Activated B cell treated with CpG ODN at 0.5 μM for 24 hours (primary cell): ENCODE measurements at regions of chr13 and their contacts with region 1.

Region 1: GRCh38 chr13:52128714-52129700 is at the start of gene NEK5:
- DNase-seq: peak; percentile 56
- ATAC-seq: peak; percentile 68
- H3K4me3 Mint-ChIP-seq: peak within 1 kb of the TSS; percentile 87
- H3K27ac Mint-ChIP-seq: no peak within 1 kb of the TSS
- H3K4me1 Mint-ChIP-seq: peaks cover 17% of the 10 kb centered on the region
- H3K27me3 Mint-ChIP-seq: peaks cover 14% of the 10 kb centered on the region
- CTCF ChIP-seq: no peak
- total RNA-seq, gene NEK5: not detected in 2 replicates

Region 2: GRCh38 chr13:51125498-51126226 is 1003.3 kb before region 1 on chr13:
- CTCF ChIA-PET with region 1: interaction called, 11 read pairs
- POLR2A ChIA-PET with region 1: no interaction called
- intact Hi-C with region 1: loop called (anchors 1 kb)
- DNase-seq: no peak
- ATAC-seq: peak; percentile 75
- H3K4me3 Mint-ChIP-seq: no peak overlapping the region
- H3K27ac Mint-ChIP-seq: no peak overlapping the region
- H3K4me1 Mint-ChIP-seq: peaks cover 3% of the 10 kb centered on the region
- H3K27me3 Mint-ChIP-seq: peaks cover 15% of the 10 kb centered on the region
- CTCF ChIP-seq: no peak

Region 3: DNA sequence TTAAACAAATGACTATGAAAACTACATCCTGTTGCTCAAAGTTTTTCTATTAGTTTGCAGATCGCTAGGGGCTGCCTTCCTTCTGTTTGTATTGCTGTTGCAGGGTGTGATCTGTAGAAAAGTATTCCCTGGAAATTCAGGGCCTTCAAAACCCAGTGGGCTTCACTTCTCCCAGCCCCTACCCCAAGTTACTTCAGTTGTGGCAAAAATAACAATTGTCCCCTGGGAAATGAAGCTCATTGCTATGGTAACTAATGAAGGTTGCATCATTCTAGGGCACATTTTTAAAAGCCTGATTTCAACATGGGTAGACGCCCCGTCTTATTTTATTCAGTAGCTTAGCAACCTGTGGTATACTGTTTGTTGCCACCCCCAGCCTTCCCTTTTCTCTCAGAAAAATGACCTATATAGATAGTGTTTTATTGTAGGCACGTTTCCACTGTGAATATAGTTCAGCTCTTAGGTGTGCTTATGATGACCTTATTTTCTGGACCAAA is 483.8 kb before region 1 on chr13:
- CTCF ChIA-PET with region 1: no interaction called
- POLR2A ChIA-PET with region 1: no interaction called
- intact Hi-C with region 1: no loop called
- DNase-seq: no peak
- ATAC-seq: peak; percentile 78
- H3K4me3 Mint-ChIP-seq: peak overlapping the region; percentile 62
- H3K27ac Mint-ChIP-seq: peak overlapping the region; percentile 90
- H3K4me1 Mint-ChIP-seq: peaks cover 59% of the 10 kb centered on the region
- H3K27me3 Mint-ChIP-seq: no peaks in the 10 kb centered on the region
- CTCF ChIP-seq: no peak

Region 4: DNA sequence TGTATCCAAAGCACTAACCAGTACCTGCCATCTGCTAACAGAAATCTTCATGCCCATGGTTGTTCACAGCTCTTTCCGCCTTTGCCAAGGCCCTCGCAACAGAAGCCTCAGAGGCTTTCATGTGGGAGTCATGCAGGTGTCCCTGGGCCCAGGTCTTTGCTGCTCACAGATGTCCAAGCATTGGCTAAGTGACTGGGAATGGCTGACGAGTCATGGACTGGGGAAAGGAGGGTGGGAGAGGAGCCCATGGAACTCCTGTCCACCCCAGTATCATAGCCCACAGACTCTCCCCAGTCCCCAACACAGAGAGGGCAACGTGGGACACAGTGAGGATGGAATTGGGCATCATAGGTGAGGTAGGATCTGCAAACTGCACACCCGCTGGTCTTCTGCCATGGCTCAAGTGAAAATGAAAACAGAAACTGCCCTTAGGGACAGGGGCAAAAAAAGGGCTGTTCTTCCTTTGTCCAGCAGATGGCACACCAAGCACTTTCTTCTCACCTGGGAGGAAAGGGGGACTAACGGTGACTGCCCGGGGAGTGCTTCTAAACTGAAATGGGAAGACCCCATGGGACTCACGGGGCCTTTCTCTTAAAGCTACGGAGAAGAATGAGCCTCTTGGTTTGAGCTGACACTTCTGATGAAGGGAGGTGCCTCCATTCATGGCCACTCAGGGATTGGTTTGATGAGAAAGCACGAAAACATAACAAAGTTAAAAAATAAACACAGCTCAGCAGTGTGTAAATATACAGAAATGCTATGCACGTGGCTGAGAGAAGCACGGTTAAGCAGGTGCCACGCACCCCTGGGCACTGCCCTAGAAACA is 314.0 kb before region 1 on chr13:
- CTCF ChIA-PET with region 1: interaction called, 13 read pairs
- POLR2A ChIA-PET with region 1: interaction called, 4 read pairs
- intact Hi-C with region 1: loop called (anchors 1 kb)
- DNase-seq: peak; percentile 56
- ATAC-seq: peak; percentile 84
- H3K4me3 Mint-ChIP-seq: peak overlapping the region; percentile 57
- H3K27ac Mint-ChIP-seq: peak overlapping the region; percentile 56
- H3K4me1 Mint-ChIP-seq: peaks cover 44% of the 10 kb centered on the region
- H3K27me3 Mint-ChIP-seq: no peaks in the 10 kb centered on the region
- CTCF ChIP-seq: peak; percentile 46

Region 5: DNA sequence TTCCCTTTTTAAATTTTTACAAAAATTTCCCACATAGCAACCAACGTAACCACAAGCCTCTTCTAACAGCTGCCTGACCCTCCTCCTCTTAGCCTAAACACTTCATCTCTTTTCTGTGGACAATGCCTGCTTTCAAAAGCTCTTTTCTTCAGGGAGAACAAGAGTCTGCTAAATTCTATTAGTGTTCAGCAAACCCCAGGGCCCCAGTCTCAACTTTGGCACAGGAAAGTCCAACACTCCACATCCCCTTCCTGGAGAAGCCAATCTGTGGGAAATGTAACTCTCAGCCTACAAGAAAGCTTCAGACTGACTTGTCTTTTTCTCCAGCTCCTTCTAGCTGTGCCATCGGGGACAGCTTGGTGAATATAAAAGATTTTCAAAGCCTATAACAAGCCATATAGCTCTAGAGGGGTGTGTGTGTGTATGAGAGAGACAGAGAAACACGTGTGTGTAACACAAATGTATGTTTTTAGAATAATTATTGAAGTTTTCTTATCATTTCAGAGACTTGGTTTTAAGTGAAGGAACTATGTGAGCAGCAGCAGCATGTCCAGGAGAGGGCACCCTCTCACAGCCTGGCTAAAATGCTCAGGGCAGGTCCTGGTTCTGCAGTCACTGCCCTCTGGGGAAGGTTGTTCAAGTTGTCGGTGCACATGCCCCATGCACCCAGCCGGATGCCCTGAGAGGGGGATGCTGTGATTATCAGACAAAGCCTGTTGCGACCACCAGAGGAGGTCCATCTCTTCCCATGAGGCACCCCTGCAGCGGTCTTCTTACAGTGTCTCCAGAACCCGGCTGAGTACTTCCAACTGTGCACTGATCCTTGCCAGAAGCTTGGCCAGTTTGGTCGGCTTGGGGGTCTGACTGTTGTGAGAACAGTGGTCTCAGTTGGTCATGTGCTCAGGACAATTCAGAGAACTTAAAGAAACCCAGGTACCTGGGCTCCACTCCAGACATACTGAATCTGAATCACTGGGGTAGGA is 232.8 kb before region 1 on chr13:
- CTCF ChIA-PET with region 1: interaction called, 18 read pairs
- POLR2A ChIA-PET with region 1: no interaction called
- intact Hi-C with region 1: loop called (anchors 1 kb)
- DNase-seq: no peak
- ATAC-seq: peak; percentile 50
- H3K4me3 Mint-ChIP-seq: no peak overlapping the region
- H3K27ac Mint-ChIP-seq: no peak overlapping the region
- H3K4me1 Mint-ChIP-seq: no peaks in the 10 kb centered on the region
- H3K27me3 Mint-ChIP-seq: peaks cover 16% of the 10 kb centered on the region
- CTCF ChIP-seq: no peak

Region 6: DNA sequence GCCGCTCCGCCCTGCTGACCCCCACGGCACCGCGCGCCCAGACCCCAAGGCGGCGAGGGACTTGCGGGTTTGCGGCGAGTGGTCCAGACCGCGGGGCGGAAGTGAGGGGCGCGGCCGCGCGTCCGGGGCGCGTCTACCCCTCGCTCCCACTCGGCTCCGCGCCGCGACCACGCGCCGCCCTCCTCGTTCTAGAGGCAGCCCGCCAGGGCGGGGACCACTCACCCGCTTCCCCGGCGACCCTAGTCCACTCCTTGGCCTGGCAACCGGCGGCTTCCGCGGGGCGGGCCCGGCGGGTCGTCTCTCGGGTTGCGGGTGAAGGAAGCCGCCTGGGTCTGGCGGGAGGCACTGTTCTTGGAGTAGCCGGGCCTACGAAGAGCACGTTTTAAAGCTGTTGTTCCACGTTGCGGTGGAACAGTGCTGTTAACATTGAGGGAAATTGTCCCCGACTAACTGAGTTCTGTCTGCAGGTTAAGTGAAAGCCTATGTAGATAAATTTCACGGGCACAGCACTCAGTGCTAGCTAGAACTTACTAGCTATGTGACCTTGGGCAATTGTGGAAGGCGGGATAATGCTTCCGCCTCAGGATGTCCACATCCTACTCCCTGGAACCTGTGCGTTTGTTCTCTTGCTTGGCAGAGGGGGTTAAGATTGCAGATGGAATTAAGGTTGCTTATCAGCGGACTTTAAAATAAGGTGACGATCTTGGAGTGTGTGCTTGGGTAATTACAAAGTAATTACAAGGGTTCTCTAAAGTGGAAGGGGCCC is 30.5 kb after region 1 on chr13 and contains the start of gene NEK3:
- CTCF ChIA-PET with region 1: interaction called, 4 read pairs
- POLR2A ChIA-PET with region 1: interaction called, 4 read pairs
- intact Hi-C with region 1: loop called (anchors 1 kb)
- DNase-seq: peak; percentile 69
- ATAC-seq: peak; percentile 81
- H3K4me3 Mint-ChIP-seq: peak within 1 kb of the TSS; percentile 90
- H3K27ac Mint-ChIP-seq: peak within 1 kb of the TSS; percentile 81
- H3K4me1 Mint-ChIP-seq: peaks cover 24% of the 10 kb centered on the region
- H3K27me3 Mint-ChIP-seq: no peaks in the 10 kb centered on the region
- CTCF ChIP-seq: no peak
- total RNA-seq, gene NEK3: 9.1 and 12.0 TPM in 2 replicates

Region 7: GRCh38 chr13:53537586-53537985 is 1408.6 kb after region 1 on chr13:
- CTCF ChIA-PET with region 1: no interaction called
- POLR2A ChIA-PET with region 1: no interaction called
- intact Hi-C with region 1: no loop called
- DNase-seq: no peak
- ATAC-seq: no peak
- H3K4me3 Mint-ChIP-seq: no peak overlapping the region
- H3K27ac Mint-ChIP-seq: no peak overlapping the region
- H3K4me1 Mint-ChIP-seq: no peaks in the 10 kb centered on the region
- H3K27me3 Mint-ChIP-seq: no peaks in the 10 kb centered on the region
- CTCF ChIP-seq: no peak